ENCODE measurements at regions of chr9 and their contacts with region 1.

Region 1: GRCh38 chr9:105226055-105226454 is 18.4 kb upstream of the SLC44A1 start:
- DNase-seq: no peak
- ATAC-seq: no peak
- H3K4me3 ChIP-seq: no peak overlapping the region
- H3K4me3 Mint-ChIP-seq: no peak overlapping the region
- H3K27ac ChIP-seq: no peak overlapping the region
- H3K27ac Mint-ChIP-seq: no peak overlapping the region
- H3K4me1 ChIP-seq: no peaks in the 10 kb centered on the region
- H3K4me1 Mint-ChIP-seq: no peaks in the 10 kb centered on the region
- H3K27me3 ChIP-seq: no peaks in the 10 kb centered on the region
- H3K27me3 Mint-ChIP-seq: peaks cover 9% of the 10 kb centered on the region
- CTCF ChIP-seq: no peak

Region 2: DNA sequence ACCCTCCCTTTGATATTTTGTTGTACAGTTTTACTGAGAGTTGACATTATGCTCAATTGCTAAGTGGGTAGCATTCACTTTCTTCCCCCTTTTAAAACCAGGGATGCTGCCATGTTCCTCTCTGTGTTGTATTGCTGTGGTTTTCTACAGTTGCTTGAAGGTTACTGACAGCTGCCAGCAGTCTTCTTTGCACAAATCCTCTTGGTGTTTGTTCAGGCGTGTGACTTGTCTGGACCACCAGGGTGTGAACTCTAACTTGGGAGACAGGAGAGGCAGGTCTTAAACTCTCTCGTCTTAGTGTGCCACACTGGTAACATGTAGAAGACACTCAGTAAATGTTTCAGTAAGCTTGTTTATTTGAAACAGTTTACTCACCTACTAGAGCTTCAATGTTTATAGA is 43.5 kb after region 1 on chr9:
- CTCF ChIA-PET with region 1: no interaction called
- POLR2A ChIA-PET with region 1: no interaction called
- intact Hi-C with region 1: loop called in 1 of 2 experiments (anchors 5 kb)
- DNase-seq: no peak
- ATAC-seq: no peak
- H3K4me3 ChIP-seq: no peak overlapping the region
- H3K4me3 Mint-ChIP-seq: no peak overlapping the region
- H3K27ac ChIP-seq: no peak overlapping the region
- H3K27ac Mint-ChIP-seq: no peak overlapping the region
- H3K4me1 ChIP-seq: no peaks in the 10 kb centered on the region
- H3K4me1 Mint-ChIP-seq: peaks cover 4% of the 10 kb centered on the region
- H3K27me3 ChIP-seq: no peaks in the 10 kb centered on the region
- H3K27me3 Mint-ChIP-seq: no peaks in the 10 kb centered on the region
- CTCF ChIP-seq: no peak

Region 3: DNA sequence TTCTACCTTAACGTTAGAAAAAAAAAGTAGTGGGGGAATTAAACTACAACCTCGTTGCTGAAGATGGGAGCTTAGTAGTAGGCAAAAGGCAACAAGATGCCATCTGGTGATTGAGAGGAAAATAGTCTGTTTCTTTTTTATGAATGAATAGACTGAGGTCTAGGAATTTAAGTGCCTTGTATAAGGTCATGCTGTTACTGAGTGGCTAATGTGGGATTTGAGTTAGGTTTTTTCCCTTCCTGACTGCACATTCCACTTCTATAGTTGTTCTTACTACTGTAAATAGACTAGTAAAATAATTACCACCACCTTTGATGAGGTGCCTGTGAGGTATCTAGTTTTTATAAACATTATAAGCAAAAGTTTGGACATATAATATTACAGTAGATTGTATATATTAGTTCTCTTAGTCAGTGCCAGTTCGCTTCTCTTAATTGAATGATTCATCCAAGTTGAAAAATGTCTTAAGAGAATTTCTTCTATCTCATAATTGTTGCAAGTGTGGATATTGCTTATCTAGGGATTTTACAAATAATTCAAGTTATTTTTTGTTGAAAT is 240.9 kb after region 1 on chr9:
- CTCF ChIA-PET with region 1: no interaction called
- POLR2A ChIA-PET with region 1: no interaction called
- intact Hi-C with region 1: no loop called
- DNase-seq: no peak
- ATAC-seq: no peak
- H3K4me3 ChIP-seq: no peak overlapping the region
- H3K4me3 Mint-ChIP-seq: no peak overlapping the region
- H3K27ac ChIP-seq: no peak overlapping the region
- H3K27ac Mint-ChIP-seq: no peak overlapping the region
- H3K4me1 ChIP-seq: no peaks in the 10 kb centered on the region
- H3K4me1 Mint-ChIP-seq: no peaks in the 10 kb centered on the region
- H3K27me3 ChIP-seq: no peaks in the 10 kb centered on the region
- H3K27me3 Mint-ChIP-seq: no peaks in the 10 kb centered on the region
- CTCF ChIP-seq: no peak

Measured in CD8-positive, alpha-beta T cell (primary cell).